Posterior cingulate gyrus (tissue), 11 donors: ENCODE measurements at regions of chr22 and their contacts with region 1.

Region 1: GRCh38 chr22:42780070-42780540 is 59.4 kb upstream of the A4GALT start:
- DNase-seq: peak in 1 of 10 donors; percentile 47

Region 2: DNA sequence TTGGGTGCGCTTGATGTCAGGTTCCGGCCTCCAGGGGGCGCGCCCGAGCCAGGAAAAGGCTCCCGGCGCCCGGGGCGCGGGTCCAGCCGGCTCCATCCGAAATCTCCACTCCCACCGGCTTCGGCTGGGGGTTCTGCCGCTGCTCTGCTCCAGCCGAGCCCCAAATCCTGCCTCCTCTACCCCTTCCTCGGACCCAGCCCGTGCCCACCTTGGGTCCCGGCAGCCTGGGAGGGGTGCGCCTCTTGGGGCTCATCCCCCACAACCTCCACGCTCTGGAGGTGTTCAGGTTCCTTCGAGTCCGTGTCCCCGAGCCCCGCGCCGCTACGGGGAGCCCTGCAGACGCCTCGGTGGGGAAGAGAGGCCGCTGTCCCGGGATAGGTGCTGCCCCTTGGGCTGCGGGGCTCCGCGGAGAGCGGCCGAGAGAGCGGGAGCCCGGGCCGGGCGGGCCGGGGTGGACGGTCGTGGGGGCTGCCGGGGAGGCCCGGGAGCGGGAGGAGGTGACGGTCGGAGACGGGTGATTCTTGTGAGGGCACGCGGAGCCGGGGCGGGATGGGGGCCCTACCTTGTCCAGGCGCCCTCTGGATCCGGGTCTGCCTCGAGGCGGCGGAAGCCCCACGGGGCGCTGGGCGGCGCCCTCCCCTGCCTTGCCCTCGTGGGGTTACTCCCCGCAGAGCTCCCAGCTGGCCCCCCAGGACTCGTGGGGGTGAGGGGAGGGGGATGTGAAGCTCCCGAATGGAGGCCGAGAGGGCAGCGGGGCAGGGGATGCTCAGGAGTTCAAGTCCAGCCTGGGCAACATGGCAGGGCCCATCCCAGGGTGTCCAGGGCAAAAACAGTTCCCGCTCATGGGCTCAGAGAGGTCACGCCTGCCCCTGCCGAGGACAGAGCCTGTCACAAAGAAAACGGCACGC is 117.7 kb before region 1 on chr22:
- intact Hi-C with region 1: loop called (anchors 10 kb)
- DNase-seq: peak; percentile 58 to 97 (median 83)

Region 3: GRCh38 chr22:42856865-42857704 is 77.0 kb after region 1 on chr22 and contains the start of gene ARFGAP3:
- intact Hi-C with region 1: no loop called
- DNase-seq: peak; percentile 89 to 99 (median 94)

Region 4: GRCh38 chr22:42901790-42902508 is 121.8 kb after region 1 on chr22:
- intact Hi-C with region 1: loop called (anchors 2 kb)
- DNase-seq: peak in 1 of 10 donors; percentile 23